ENCODE measurements at regions of chr12 and their contacts with region 1.

Region 1: GRCh38 chr12:110431957-110432587 is 18.1 kb downstream of the ARPC3 start:
- DNase-seq: no peak
- H3K4me3 ChIP-seq: no peak overlapping the region
- H3K27ac ChIP-seq: no peak overlapping the region
- H3K4me1 ChIP-seq: peaks cover 12% of the 10 kb centered on the region
- H3K27me3 ChIP-seq: no peaks in the 10 kb centered on the region
- CTCF ChIP-seq: no peak
- POLR2A ChIP-seq: no peak

Region 2: GRCh38 chr12:110100315-110100970 is 331.6 kb before region 1 on chr12:
- CTCF ChIA-PET with region 1: interaction called, 78 read pairs
- POLR2A ChIA-PET with region 1: no interaction called
- dilution Hi-C with region 1: no loop called
- intact Hi-C with region 1: loop called (anchors 1 kb)
- DNase-seq: peak; percentile 85
- H3K4me3 ChIP-seq: no peak overlapping the region
- H3K27ac ChIP-seq: no peak overlapping the region
- H3K4me1 ChIP-seq: no peaks in the 10 kb centered on the region
- H3K27me3 ChIP-seq: no peaks in the 10 kb centered on the region
- CTCF ChIP-seq: peak; percentile 81 to 89
- POLR2A ChIP-seq: no peak

Region 3: GRCh38 chr12:110280779-110281548 is 151.1 kb before region 1 on chr12 and contains the start of gene ATP2A2:
- CTCF ChIA-PET with region 1: interaction called, 16 read pairs
- POLR2A ChIA-PET with region 1: interaction called, 7 read pairs
- dilution Hi-C with region 1: no loop called
- intact Hi-C with region 1: loop called (anchors 1 kb)
- DNase-seq: peak; percentile 86
- H3K4me3 ChIP-seq: peak within 1 kb of the TSS; percentile 38 to 95 (median 92)
- H3K27ac ChIP-seq: peak within 1 kb of the TSS; percentile 76
- H3K4me1 ChIP-seq: peaks cover 40% of the 10 kb centered on the region
- H3K27me3 ChIP-seq: no peaks in the 10 kb centered on the region
- CTCF ChIP-seq: no peak
- POLR2A ChIP-seq: peak; percentile 96
- total RNA-seq, gene ATP2A2: 230 and 239 TPM in 2 replicates

Region 4: GRCh38 chr12:110355073-110355472 is 77.0 kb before region 1 on chr12:
- CTCF ChIA-PET with region 1: interaction called, 17 read pairs
- POLR2A ChIA-PET with region 1: interaction called, 3 read pairs
- dilution Hi-C with region 1: no loop called
- intact Hi-C with region 1: loop called (anchors 1 kb)
- DNase-seq: no peak
- H3K4me3 ChIP-seq: no peak overlapping the region
- H3K27ac ChIP-seq: no peak overlapping the region
- H3K4me1 ChIP-seq: peaks cover 16% of the 10 kb centered on the region
- H3K27me3 ChIP-seq: no peaks in the 10 kb centered on the region
- CTCF ChIP-seq: peak; percentile 22 to 27
- POLR2A ChIP-seq: no peak

Region 5: GRCh38 chr12:110379197-110379596 is 52.9 kb before region 1 on chr12:
- CTCF ChIA-PET with region 1: interaction called, 12 read pairs
- POLR2A ChIA-PET with region 1: no interaction called
- dilution Hi-C with region 1: no loop called
- intact Hi-C with region 1: no loop called
- DNase-seq: no peak
- H3K4me3 ChIP-seq: no peak overlapping the region
- H3K27ac ChIP-seq: no peak overlapping the region
- H3K4me1 ChIP-seq: no peaks in the 10 kb centered on the region
- H3K27me3 ChIP-seq: no peaks in the 10 kb centered on the region
- CTCF ChIP-seq: no peak
- POLR2A ChIP-seq: no peak

Region 6: GRCh38 chr12:110421159-110421661 is 10.9 kb before region 1 on chr12:
- CTCF ChIA-PET with region 1: interaction called, 30 read pairs
- POLR2A ChIA-PET with region 1: no interaction called
- dilution Hi-C with region 1: no loop called
- intact Hi-C with region 1: no loop called
- DNase-seq: no peak
- H3K4me3 ChIP-seq: no peak overlapping the region
- H3K27ac ChIP-seq: no peak overlapping the region
- H3K4me1 ChIP-seq: no peaks in the 10 kb centered on the region
- H3K27me3 ChIP-seq: peaks cover 6 to 11% of the 10 kb centered on the region in 2 experiments
- CTCF ChIP-seq: no peak
- POLR2A ChIP-seq: no peak

Region 7: DNA sequence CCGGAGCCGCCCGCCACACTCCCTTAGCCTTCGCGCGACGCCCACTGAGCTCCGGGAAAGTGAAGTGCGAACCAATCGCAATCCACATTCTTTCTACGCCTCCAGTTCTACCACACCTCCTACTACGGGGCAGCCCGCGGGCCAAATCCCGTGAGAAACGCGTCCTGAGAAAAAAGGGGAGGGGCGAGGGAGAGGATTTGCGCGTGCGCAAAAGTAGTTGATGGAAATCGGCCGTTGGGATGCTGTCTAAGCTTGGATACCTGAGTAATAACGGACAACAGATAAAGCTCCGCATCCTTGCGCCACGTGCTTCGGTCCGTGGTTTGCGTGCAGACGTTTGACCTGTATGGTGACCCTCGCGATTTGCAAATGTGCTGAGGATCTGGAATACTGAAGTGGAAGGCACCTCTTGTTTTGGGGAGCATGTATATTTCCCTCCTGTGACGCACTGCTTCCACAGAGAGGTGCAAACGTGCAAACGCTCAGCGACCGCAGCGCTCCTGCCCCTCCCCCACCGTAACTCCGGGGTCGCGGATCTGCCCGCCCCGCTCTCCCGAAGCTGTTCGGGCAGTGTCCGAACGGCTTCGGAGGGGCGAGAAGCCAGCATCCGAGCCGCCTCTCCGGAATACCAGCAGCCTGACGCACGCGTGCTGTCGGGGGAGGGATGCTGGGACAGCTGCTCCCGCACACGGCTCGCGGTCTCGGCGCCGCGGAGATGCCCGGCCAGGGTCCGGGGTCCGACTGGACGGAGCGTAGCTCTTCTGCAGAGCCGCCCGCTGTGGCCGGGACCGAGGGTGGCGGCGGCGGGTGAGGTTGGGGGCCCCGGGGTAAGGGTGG is 36.4 kb after region 1 on chr12 and contains the starts of genes FAM216A and GPN3:
- CTCF ChIA-PET with region 1: interaction called, 19 read pairs
- POLR2A ChIA-PET with region 1: interaction called, 3 read pairs
- dilution Hi-C with region 1: no loop called
- intact Hi-C with region 1: no loop called
- DNase-seq: peak; percentile 98
- H3K4me3 ChIP-seq: peak within 1 kb of the TSS; percentile 60 to 84 (median 77)
- H3K27ac ChIP-seq: peak within 1 kb of the TSS; percentile 52
- H3K4me1 ChIP-seq: peaks cover 13% of the 10 kb centered on the region
- H3K27me3 ChIP-seq: no peaks in the 10 kb centered on the region
- CTCF ChIP-seq: no peak
- POLR2A ChIP-seq: peak; percentile 64
- total RNA-seq, gene FAM216A: 7.9 and 11.7 TPM in 2 replicates
- total RNA-seq, gene GPN3: 25.0 and 29.6 TPM in 2 replicates

Measured in endothelial cell of umbilical vein (primary cell).